HepG2 (cell line): ENCODE measurements at regions of chr2 and their contacts with region 1.

Region 1: GRCh38 chr2:167550448-167550847 is 662.2 kb downstream of the XIRP2 start:
- DNase-seq: peak; percentile 6
- ATAC-seq: peak; percentile 80
- H3K4me3 ChIP-seq: no peak overlapping the region
- H3K27ac ChIP-seq: no peak overlapping the region
- H3K4me1 ChIP-seq: peaks cover 10% of the 10 kb centered on the region
- H3K27me3 ChIP-seq: no peaks in the 10 kb centered on the region
- CTCF ChIP-seq: peak; percentile 50
- EP300 ChIP-seq: no peak
- POLR2A ChIP-seq: no peak
- RAD21 ChIP-seq: no peak

Region 2: DNA sequence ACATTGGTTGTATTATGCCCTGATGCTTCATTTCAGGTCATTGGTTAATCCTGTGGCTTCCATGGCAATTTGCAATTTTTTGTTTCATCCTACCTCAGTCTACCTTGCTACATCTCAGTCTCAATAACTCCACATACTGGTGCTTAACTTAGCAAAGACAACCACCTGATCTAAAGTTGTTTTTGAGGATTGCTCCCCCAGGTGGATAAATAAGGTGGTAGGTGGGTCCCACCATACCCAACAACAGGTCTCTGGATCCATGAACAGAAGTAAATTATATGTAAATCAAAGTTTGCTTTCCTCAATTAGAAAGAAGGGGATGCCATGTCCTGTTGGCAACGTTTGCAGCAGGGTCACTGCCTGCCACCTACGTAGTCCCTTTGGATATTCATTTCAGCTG is 655.2 kb before region 1 on chr2:
- CTCF ChIA-PET with region 1: no interaction called
- POLR2A ChIA-PET with region 1: no interaction called
- in situ Hi-C with region 1: no loop called
- intact Hi-C with region 1: loop called (anchors 10 kb)
- DNase-seq: no peak
- ATAC-seq: no peak; the same call in 2 of the 3 replicates
- H3K4me3 ChIP-seq: no peak overlapping the region
- H3K27ac ChIP-seq: no peak overlapping the region
- H3K4me1 ChIP-seq: no peaks in the 10 kb centered on the region
- H3K27me3 ChIP-seq: no peaks in the 10 kb centered on the region
- CTCF ChIP-seq: peak; percentile 35
- EP300 ChIP-seq: no peak
- POLR2A ChIP-seq: no peak
- RAD21 ChIP-seq: no peak

Region 3: DNA sequence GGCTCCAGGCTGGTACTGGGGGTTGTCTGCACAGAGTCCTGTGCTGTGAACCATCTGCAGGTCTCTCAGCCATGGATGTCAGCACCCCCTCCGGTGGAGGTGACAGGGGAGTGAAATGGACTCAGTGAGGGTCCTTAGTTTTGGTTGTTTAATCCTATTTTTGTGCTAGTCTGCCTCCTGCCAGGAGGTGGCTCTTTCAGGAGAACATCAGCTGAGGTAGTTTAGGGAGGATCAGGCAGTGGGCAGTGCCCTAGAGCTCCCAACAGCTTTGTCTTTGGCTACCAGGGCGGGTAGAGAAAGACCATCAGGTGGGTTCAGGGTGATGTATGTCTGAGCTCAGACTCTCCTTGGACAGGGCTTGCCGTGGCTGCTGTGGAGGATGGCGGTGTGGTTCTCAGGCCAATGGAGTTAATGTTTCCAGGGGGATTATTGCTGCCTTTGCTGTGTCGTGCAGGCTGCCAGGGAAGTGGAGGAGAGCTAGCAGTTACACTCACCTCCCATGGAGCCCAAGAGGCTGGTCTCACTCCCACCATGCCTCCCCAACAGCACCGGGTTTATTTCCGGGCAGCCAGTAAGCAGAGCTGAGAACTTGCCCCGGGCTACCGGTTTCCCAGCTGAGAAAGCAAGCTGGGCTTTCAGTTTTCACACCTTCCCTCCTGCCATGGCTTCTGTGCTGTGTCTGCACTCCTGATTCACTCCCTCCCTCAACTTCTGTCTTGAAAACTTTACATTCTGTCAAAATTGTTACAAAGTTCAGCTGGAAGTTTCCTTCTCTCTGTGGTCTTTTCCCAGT is 98.8 kb before region 1 on chr2:
- CTCF ChIA-PET with region 1: no interaction called
- POLR2A ChIA-PET with region 1: no interaction called
- in situ Hi-C with region 1: no loop called
- intact Hi-C with region 1: loop called (anchors 2 kb)
- DNase-seq: no peak
- ATAC-seq: peak; percentile 78
- H3K4me3 ChIP-seq: no peak overlapping the region
- H3K27ac ChIP-seq: no peak overlapping the region
- H3K4me1 ChIP-seq: no peaks in the 10 kb centered on the region
- H3K27me3 ChIP-seq: no peaks in the 10 kb centered on the region; a peak in 1 of 5 replicates
- CTCF ChIP-seq: peak; percentile 22; the same call in 1 of the 2 replicates
- EP300 ChIP-seq: no peak
- POLR2A ChIP-seq: no peak
- RAD21 ChIP-seq: no peak

Region 4: GRCh38 chr2:167504061-167504460 is 46.4 kb before region 1 on chr2:
- CTCF ChIA-PET with region 1: no interaction called
- POLR2A ChIA-PET with region 1: no interaction called
- in situ Hi-C with region 1: no loop called
- intact Hi-C with region 1: no loop called
- DNase-seq: no peak
- ATAC-seq: no peak
- H3K4me3 ChIP-seq: no peak overlapping the region
- H3K27ac ChIP-seq: no peak overlapping the region
- H3K4me1 ChIP-seq: peaks cover 5% of the 10 kb centered on the region
- H3K27me3 ChIP-seq: no peaks in the 10 kb centered on the region
- CTCF ChIP-seq: no peak
- EP300 ChIP-seq: no peak
- POLR2A ChIP-seq: no peak
- RAD21 ChIP-seq: no peak

Region 5: GRCh38 chr2:167595839-167596471 is 45.5 kb after region 1 on chr2:
- CTCF ChIA-PET with region 1: no interaction called
- POLR2A ChIA-PET with region 1: no interaction called
- in situ Hi-C with region 1: no loop called
- intact Hi-C with region 1: no loop called
- DNase-seq: no peak
- ATAC-seq: no peak
- H3K4me3 ChIP-seq: no peak overlapping the region
- H3K27ac ChIP-seq: no peak overlapping the region
- H3K4me1 ChIP-seq: no peaks in the 10 kb centered on the region
- H3K27me3 ChIP-seq: no peaks in the 10 kb centered on the region
- CTCF ChIP-seq: no peak
- EP300 ChIP-seq: no peak
- POLR2A ChIP-seq: no peak
- RAD21 ChIP-seq: no peak

Region 6: GRCh38 chr2:167706800-167707199 is 156.4 kb after region 1 on chr2:
- CTCF ChIA-PET with region 1: no interaction called
- POLR2A ChIA-PET with region 1: no interaction called
- in situ Hi-C with region 1: no loop called
- intact Hi-C with region 1: no loop called
- DNase-seq: peak; percentile 2
- ATAC-seq: no peak
- H3K4me3 ChIP-seq: no peak overlapping the region
- H3K27ac ChIP-seq: no peak overlapping the region
- H3K4me1 ChIP-seq: peaks cover 5% of the 10 kb centered on the region; the same call in 1 of the 2 replicates
- H3K27me3 ChIP-seq: no peaks in the 10 kb centered on the region
- CTCF ChIP-seq: no peak
- EP300 ChIP-seq: no peak
- POLR2A ChIP-seq: no peak
- RAD21 ChIP-seq: no peak